Mammary epithelial cell (primary cell): ENCODE measurements at regions of chr20 and their contacts with region 1.

Region 1: GRCh38 chr20:32652739-32653526 is 20.8 kb downstream of the C20orf203 start:
- DNase-seq: peak; percentile 67
- H3K4me3 ChIP-seq: no peak overlapping the region
- H3K27ac ChIP-seq: no peak overlapping the region
- H3K4me1 ChIP-seq: peaks cover 11% of the 10 kb centered on the region
- H3K27me3 ChIP-seq: no peaks in the 10 kb centered on the region
- CTCF ChIP-seq: peak; percentile 89 to 92

Region 2: DNA sequence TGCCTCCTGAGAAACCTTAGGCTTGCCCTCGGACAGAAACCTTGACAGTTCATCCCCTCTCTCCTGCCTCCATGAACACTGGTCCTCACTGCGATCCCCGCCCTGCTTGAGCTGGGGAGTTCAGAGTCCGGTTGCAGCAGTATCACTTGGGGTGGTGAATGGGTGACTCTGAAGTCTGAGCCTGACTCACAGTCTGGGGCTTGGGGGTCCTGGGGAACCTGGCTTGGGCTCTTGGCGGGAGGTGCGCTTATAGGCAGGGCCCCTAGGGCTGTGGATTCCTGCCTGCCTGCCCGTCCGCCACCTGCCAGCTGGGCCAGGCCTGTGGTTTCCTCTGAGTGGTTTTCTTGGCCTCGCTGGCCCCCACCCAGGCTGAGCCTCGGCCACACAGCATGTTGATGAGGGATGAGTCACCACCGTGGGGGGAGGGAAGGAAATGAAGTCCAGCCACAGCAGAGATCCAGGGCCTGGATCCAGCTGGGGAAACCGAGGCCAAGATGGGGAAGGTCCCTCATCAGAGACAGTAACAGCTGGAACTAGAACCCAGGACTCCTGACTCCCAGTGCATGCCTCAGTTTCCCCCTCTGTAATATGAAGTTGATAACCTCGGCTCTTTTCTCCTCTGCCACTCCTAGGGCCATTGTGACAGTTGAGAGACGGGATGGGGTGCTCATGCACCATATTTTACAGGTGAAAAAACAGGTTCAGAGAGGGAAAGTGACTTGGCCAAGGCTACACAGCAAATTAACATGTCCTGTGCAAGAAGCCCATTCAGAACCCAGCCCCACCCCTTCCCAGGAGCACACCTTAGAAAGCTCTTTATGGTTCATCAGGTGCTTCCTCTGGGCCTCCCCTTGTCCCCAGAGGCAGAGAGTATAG is 816.7 kb before region 1 on chr20:
- CTCF ChIA-PET with region 1: no interaction called
- dilution Hi-C with region 1: no loop called
- in situ Hi-C with region 1: loop called in 1 of 2 experiments (anchors 25 kb)
- intact Hi-C with region 1: no loop called
- DNase-seq: peak; percentile 85
- H3K4me3 ChIP-seq: no peak overlapping the region
- H3K27ac ChIP-seq: no peak overlapping the region
- H3K4me1 ChIP-seq: peaks cover 20% of the 10 kb centered on the region
- H3K27me3 ChIP-seq: no peaks in the 10 kb centered on the region
- CTCF ChIP-seq: no peak

Region 3: GRCh38 chr20:31951530-31952453 is 701.1 kb before region 1 on chr20 and contains the start of gene PDRG1:
- CTCF ChIA-PET with region 1: no interaction called
- dilution Hi-C with region 1: no loop called
- in situ Hi-C with region 1: no loop called
- intact Hi-C with region 1: loop called (anchors 5 kb)
- DNase-seq: peak; percentile 90
- H3K4me3 ChIP-seq: peak within 1 kb of the TSS; percentile 80 to 98 (median 86)
- H3K27ac ChIP-seq: peak within 1 kb of the TSS; percentile 40
- H3K4me1 ChIP-seq: peaks cover 8% of the 10 kb centered on the region
- H3K27me3 ChIP-seq: no peaks in the 10 kb centered on the region
- CTCF ChIP-seq: peak; percentile 84 to 96
- total RNA-seq, gene PDRG1: 5.0 to 15.6 TPM

Region 4: DNA sequence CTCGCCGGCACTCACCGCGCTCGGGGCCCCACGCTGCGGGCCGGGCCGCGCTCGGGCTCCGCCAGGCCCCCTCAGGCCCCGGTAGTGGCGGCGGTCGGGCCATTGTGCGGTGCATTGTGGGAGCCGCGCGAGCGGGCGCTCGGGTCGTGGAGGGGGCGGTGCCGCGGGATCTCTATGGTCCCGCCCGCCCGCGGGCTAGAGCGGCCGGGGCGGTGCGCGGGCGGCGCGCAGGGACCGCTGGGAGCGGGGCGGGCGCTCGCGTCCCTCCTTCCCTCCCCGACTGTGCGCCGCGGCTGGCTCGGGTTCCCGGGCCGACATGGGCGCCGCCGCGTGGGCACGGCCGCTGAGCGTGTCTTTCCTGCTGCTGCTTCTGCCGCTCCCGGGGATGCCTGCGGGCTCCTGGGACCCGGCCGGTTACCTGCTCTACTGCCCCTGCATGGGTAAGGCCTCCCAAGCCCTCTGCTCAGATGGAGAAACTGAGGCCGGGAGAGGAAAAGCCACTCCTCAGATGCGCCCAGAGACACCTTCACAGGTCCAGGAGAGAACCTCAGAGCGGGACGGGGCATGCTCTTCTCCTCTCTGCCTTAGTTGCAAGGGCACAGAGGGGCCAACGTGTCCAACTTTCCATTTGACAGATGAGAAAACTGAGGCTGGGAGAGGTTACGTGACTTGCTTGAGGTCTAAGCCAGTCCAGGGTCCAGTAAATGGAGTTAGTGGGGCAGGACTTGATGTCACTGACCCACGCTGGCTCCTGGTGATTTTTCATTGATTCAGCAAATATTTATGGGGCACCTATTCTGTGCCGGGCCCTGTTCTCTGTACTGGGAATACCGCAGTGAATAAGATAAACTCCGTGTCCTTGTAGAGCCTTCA is 445.1 kb before region 1 on chr20 and contains the starts of genes PLAGL2 and POFUT1:
- CTCF ChIA-PET with region 1: no interaction called
- dilution Hi-C with region 1: no loop called
- in situ Hi-C with region 1: no loop called
- intact Hi-C with region 1: loop called (anchors 10 kb)
- DNase-seq: peak; percentile 87
- H3K4me3 ChIP-seq: peak within 1 kb of the TSS; percentile 84 to 100 (median 88)
- H3K27ac ChIP-seq: peak within 1 kb of the TSS; percentile 97
- H3K4me1 ChIP-seq: peaks cover 44% of the 10 kb centered on the region
- H3K27me3 ChIP-seq: no peaks in the 10 kb centered on the region
- CTCF ChIP-seq: peak in 1 of 2 donors; percentile 27
- total RNA-seq, gene PLAGL2: 6.3 to 17.2 TPM
- total RNA-seq, gene POFUT1: 36.7 to 43.5 TPM

Region 5: GRCh38 chr20:32516583-32517517 is 136.1 kb before region 1 on chr20:
- CTCF ChIA-PET with region 1: interaction called, 6 read pairs
- dilution Hi-C with region 1: loop called (anchors 5 kb)
- in situ Hi-C with region 1: loop called in 1 of 2 experiments (anchors 5 kb)
- intact Hi-C with region 1: loop called (anchors 1 kb)
- DNase-seq: no peak
- H3K4me3 ChIP-seq: no peak overlapping the region
- H3K27ac ChIP-seq: no peak overlapping the region
- H3K4me1 ChIP-seq: peaks cover 9% of the 10 kb centered on the region
- H3K27me3 ChIP-seq: no peaks in the 10 kb centered on the region
- CTCF ChIP-seq: no peak